AG04449 (cell line): ENCODE measurements at regions of chr12 and their contacts with region 1.

Region 1: GRCh38 chr12:118346895-118347294 is 25.8 kb downstream of the TAOK3 start:
- DNase-seq: no peak
- H3K4me3 ChIP-seq: no peak overlapping the region
- CTCF ChIP-seq: no peak

Region 2: DNA sequence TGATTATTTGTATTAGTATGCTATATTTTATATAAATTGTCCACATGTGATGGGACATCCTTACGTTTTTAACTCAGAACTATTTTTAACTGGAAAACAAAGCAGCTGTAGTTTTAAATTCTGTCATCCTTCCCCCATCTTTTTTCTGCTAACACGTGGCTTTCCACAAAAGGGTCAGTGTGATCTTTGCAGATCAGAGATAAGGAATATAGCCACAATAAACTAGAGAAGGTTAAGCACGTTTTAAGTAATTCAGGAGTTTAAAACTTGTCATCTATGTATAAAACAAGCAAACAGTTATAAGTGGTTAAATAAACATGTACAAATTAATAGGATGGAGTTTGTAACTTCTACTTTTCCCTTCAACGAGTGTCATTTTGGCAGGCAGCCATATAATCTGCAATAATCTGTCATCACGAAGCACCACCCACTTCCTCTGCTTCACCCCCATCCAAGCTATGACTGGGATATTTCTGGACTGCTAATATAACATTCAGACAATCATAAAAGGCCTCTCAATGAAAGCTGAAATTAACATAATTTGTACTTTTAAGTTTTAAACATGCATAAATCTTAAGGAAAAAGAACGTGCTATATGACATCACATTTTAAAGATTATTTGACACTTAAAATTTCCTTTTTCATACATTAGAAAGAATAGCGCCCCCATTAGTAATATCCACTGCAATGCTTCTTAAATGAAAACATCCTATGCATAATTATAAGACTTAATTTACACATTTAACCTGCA is 10.5 kb after region 1 on chr12:
- CTCF ChIA-PET with region 1: interaction called, 11 read pairs
- POLR2A ChIA-PET with region 1: no interaction called
- DNase-seq: no peak
- H3K4me3 ChIP-seq: no peak overlapping the region
- CTCF ChIP-seq: no peak